MCF 10A (cell line): ENCODE measurements at regions of chr20 and their contacts with region 1.

Region 1: DNA sequence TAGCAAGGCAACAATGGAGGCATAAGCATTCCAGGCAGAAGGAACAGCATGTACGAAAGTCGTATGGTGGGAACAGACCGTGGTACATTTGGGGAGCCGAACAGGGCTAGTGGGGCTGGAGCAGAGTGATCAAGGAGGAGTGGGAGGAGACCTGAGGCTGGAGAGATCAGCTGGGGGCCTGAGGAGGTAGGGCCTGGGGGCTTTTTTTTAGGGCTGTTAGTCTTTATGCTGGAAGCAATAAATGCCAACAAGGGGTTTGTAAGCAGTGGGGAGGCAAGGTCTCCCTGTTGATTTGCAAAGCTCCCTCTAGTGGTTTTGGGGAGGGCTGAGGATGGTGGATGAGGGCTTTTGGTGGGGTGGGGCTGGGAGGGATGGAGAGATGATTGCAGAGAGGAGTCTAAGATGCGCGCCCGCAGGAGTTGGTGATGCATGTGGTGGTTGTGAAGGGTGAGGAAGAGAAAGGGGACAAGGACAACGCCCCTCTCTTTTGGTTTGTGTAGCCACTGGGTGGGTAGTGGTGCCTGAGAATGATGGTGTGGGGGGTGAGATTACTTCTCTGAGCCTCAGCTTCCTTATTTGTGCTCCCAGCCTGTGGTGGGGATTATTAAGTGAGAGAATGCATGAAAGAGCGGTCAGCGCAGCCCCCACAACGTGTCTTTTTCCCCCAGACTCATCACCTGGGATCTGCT is 74.1 kb upstream of the TOX2 start:
- DNase-seq: peak; percentile 53
- H3K4me3 Mint-ChIP-seq: no peak overlapping the region
- H3K27ac Mint-ChIP-seq: no peak overlapping the region
- H3K4me1 Mint-ChIP-seq: peaks cover 20% of the 10 kb centered on the region
- H3K27me3 Mint-ChIP-seq: no peaks in the 10 kb centered on the region
- CTCF ChIP-seq: peak; percentile 37

Region 2: GRCh38 chr20:43824309-43825050 is 16.0 kb before region 1 on chr20:
- CTCF ChIA-PET with region 1: interaction called, 14 read pairs
- POLR2A ChIA-PET with region 1: interaction called, 6 read pairs
- intact Hi-C with region 1: no loop called
- DNase-seq: no peak
- H3K4me3 Mint-ChIP-seq: no peak overlapping the region
- H3K27ac Mint-ChIP-seq: no peak overlapping the region
- H3K4me1 Mint-ChIP-seq: peaks cover 14% of the 10 kb centered on the region
- H3K27me3 Mint-ChIP-seq: peaks cover 9% of the 10 kb centered on the region
- CTCF ChIP-seq: no peak

Region 3: DNA sequence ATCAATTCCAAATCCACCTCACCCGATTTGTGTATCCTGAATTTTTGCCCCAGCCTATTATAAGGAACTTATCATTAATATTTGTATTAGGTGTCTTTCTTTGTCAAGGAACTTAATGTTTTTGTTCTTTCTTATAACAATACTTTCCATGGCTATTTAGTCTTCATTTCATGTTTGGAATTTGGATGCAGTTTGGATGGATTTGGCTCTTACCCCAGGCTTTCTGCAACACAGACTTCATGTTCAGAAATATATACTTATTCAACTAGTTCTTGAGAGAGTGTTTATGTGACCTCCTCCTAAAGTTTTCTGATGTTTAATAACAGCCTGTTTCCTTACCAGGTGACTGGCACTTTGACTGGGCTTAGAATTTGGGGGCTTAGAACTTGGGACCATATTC is 38.2 kb after region 1 on chr20:
- CTCF ChIA-PET with region 1: no interaction called
- POLR2A ChIA-PET with region 1: no interaction called
- intact Hi-C with region 1: no loop called
- DNase-seq: no peak
- H3K4me3 Mint-ChIP-seq: no peak overlapping the region
- H3K27ac Mint-ChIP-seq: no peak overlapping the region
- H3K4me1 Mint-ChIP-seq: no peaks in the 10 kb centered on the region
- H3K27me3 Mint-ChIP-seq: peaks cover 16% of the 10 kb centered on the region
- CTCF ChIP-seq: no peak

Region 4: GRCh38 chr20:44038681-44039123 is 198.2 kb after region 1 on chr20:
- CTCF ChIA-PET with region 1: no interaction called
- POLR2A ChIA-PET with region 1: no interaction called
- intact Hi-C with region 1: no loop called
- DNase-seq: no peak
- H3K4me3 Mint-ChIP-seq: no peak overlapping the region
- H3K27ac Mint-ChIP-seq: peak overlapping the region; percentile 12
- H3K4me1 Mint-ChIP-seq: no peaks in the 10 kb centered on the region
- H3K27me3 Mint-ChIP-seq: peaks cover 41% of the 10 kb centered on the region
- CTCF ChIP-seq: no peak